Naive thymus-derived CD4-positive, alpha-beta T cell (primary cell): ENCODE measurements at regions of chr6 and their contacts with region 1.

Region 1: GRCh38 chr6:32529697-32530429 is at the start of gene HLA-DRB5:
- DNase-seq: peak in 3 of 9 donors; percentile 1 to 24 (median 7)
- ATAC-seq: peak; percentile 82
- H3K4me3 ChIP-seq: peak within 1 kb of the TSS; percentile 33
- H3K4me3 Mint-ChIP-seq: peak within 1 kb of the TSS in 8 of 10 donors; percentile 21 to 76 (median 53)
- H3K27ac ChIP-seq: no peak within 1 kb of the TSS
- H3K27ac Mint-ChIP-seq: peak within 1 kb of the TSS in 1 of 9 donors; percentile 6
- H3K4me1 ChIP-seq: no peaks in the 10 kb centered on the region
- H3K4me1 Mint-ChIP-seq: peaks cover 0 to 7% (median 0%) of the 10 kb centered on the region in 7 donors
- H3K27me3 ChIP-seq: no peaks in the 10 kb centered on the region
- H3K27me3 Mint-ChIP-seq: peaks cover 0 to 37% (median 0%) of the 10 kb centered on the region in 5 donors
- total RNA-seq, gene HLA-DRB5: 0.68 to 37.4 (median 7.1) TPM

Region 2: DNA sequence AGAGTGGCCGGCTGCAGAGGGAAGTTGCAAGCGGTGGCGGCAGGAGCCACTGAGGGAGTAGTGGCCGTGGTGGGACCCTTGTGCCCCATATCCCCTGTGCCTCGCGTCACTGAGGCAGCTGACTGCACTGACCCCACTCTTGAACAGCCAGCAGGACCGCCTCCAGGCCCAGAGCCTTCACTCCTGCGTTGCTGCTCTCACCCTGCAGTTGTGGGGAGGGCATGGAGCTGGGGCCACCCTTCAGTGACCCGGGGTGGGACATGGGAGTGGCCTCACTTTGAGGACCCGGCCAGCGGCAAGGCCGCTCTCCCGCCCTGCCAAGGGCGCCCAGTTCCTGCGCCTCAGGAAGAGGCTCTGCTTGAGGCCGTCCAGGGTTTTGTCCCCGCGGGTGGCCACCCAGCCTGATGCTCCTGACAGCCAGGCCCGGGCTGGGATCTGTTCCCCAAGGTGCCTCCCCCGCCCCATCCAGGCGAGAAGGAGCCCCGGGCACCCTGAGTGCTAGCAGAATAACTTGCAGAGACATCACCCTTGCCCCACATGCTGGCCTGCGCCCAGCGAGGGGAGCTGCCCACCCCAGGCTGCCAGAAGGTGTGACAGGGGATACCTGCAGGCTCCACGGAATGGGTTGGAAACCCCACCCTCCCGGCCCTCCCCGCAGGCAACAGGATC is 45.8 kb before region 1 on chr6:
- CTCF ChIA-PET with region 1: no interaction called
- POLR2A ChIA-PET with region 1: no interaction called
- intact Hi-C with region 1: loop called in 1 of 2 experiments (anchors 1 kb)
- DNase-seq: no peak
- ATAC-seq: no peak
- H3K4me3 ChIP-seq: no peak overlapping the region
- H3K4me3 Mint-ChIP-seq: no peak overlapping the region
- H3K27ac ChIP-seq: no peak overlapping the region
- H3K27ac Mint-ChIP-seq: no peak overlapping the region
- H3K4me1 ChIP-seq: no peaks in the 10 kb centered on the region
- H3K4me1 Mint-ChIP-seq: peaks cover 0 to 6% (median 0%) of the 10 kb centered on the region in 7 donors
- H3K27me3 ChIP-seq: no peaks in the 10 kb centered on the region
- H3K27me3 Mint-ChIP-seq: peaks cover 0 to 42% (median 4%) of the 10 kb centered on the region in 5 donors

Region 3: GRCh38 chr6:32570363-32570905 is 40.6 kb after region 1 on chr6:
- CTCF ChIA-PET with region 1: no interaction called
- POLR2A ChIA-PET with region 1: no interaction called
- intact Hi-C with region 1: loop called in 1 of 2 experiments (anchors 5 kb)
- DNase-seq: no peak
- ATAC-seq: no peak
- H3K4me3 ChIP-seq: no peak overlapping the region
- H3K4me3 Mint-ChIP-seq: no peak overlapping the region
- H3K27ac ChIP-seq: no peak overlapping the region
- H3K27ac Mint-ChIP-seq: no peak overlapping the region
- H3K4me1 ChIP-seq: no peaks in the 10 kb centered on the region
- H3K4me1 Mint-ChIP-seq: peaks cover 0 to 11% (median 3%) of the 10 kb centered on the region in 7 donors
- H3K27me3 ChIP-seq: no peaks in the 10 kb centered on the region
- H3K27me3 Mint-ChIP-seq: peaks cover 0 to 26% (median 3%) of the 10 kb centered on the region in 5 donors